Activated T-helper 2 cell treated with anti-CD3 and anti-CD28 coated beads, Interferon-gamma antibody, Interleukin-2, Interleukin-4, amounts not matched to agents 10 μg/mL and 5 μg/mL and 100 μg/mL, durations not matched to agents 14 hours and 24 hours and 36 hours (primary cell): ENCODE measurements at regions of chr18 and their contacts with region 1.

Region 1: GRCh38 chr18:26648509-26649192 is 100.3 kb upstream of the KCTD1 start:
- DNase-seq: no peak
- H3K4me3 Mint-ChIP-seq: no peak overlapping the region
- H3K27ac Mint-ChIP-seq: no peak overlapping the region
- H3K4me1 Mint-ChIP-seq: no peaks in the 10 kb centered on the region
- H3K27me3 Mint-ChIP-seq: peaks cover 44% of the 10 kb centered on the region

Region 2: DNA sequence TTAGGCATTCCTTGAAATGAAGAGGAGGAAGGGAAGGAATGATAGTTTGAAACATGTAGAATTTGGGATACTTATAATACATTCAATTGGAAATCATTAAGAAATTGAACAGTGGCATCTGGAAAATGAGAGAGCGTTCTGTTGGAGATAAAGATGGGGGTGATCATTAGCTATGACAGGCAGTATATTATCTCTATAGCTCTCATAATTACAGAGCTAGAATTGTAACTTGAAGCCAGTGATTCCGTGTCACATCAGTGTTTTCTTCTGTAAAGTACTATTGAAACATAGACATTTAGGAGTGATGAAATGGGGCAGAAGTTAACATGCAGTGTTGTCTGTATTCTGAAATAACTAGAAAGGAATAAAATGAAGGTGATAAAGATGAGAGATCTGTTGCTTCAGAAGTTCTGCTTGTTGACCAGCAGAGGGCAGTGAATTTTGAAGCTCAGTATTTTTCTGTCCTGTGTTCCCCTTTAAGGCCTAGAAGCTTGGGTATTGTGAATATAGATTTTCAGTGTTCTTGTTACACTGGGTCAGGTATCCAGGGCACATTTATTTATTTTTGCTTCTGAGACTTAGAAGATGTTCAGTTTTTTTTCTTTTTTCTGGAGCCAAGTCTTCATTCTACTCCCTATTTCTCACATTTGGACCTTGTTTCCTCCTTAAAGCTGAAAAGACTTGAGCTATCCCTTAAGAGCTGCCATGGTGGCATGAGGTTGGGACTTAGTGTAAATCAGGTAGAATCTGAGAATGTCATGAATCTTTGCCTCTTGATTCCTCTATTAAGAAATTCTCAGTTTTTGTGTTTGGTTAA is 265.0 kb before region 1 on chr18:
- intact Hi-C with region 1: loop called (anchors 1 kb)
- DNase-seq: no peak
- H3K4me3 Mint-ChIP-seq: no peak overlapping the region
- H3K27ac Mint-ChIP-seq: no peak overlapping the region
- H3K4me1 Mint-ChIP-seq: no peaks in the 10 kb centered on the region
- H3K27me3 Mint-ChIP-seq: no peaks in the 10 kb centered on the region

Region 3: GRCh38 chr18:26621161-26622026 is 27.3 kb before region 1 on chr18:
- intact Hi-C with region 1: loop called (anchors 1 kb)
- DNase-seq: peak; percentile 20
- H3K4me3 Mint-ChIP-seq: peak overlapping the region; percentile 55
- H3K27ac Mint-ChIP-seq: no peak overlapping the region
- H3K4me1 Mint-ChIP-seq: peaks cover 3% of the 10 kb centered on the region
- H3K27me3 Mint-ChIP-seq: no peaks in the 10 kb centered on the region